Dorsolateral prefrontal cortex (tissue), 120 donors: ENCODE measurements at regions of chr1 and their contacts with region 1.

Region 1: GRCh38 chr1:51535006-51535592 is 16.0 kb upstream of the EPS15 start:
- DNase-seq: peak; percentile 28 to 84 (median 58)
- H3K4me3 ChIP-seq: peak overlapping the region in 7 of 59 donors; percentile 10 to 43 (median 16)
- H3K27ac ChIP-seq: peak overlapping the region; percentile 38 to 99 (median 92)
- H3K27me3 ChIP-seq: no peaks in the 10 kb centered on the region
- CTCF ChIP-seq: peak; percentile 62 to 93 (median 82)

Region 2: GRCh38 chr1:51296383-51297357 is 238.4 kb before region 1 on chr1:
- intact Hi-C with region 1: loop called (anchors 5 to 10 kb)
- DNase-seq: peak; percentile 73 to 87 (median 82)
- H3K4me3 ChIP-seq: peak overlapping the region; percentile 45 to 79 (median 64)
- H3K27ac ChIP-seq: peak overlapping the region in 24 of 59 donors; percentile 2 to 84 (median 37)
- H3K27me3 ChIP-seq: no peaks in the 10 kb centered on the region
- CTCF ChIP-seq: peak; percentile 76 to 98 (median 94)

Region 3: GRCh38 chr1:51392241-51392640 is 142.9 kb before region 1 on chr1:
- intact Hi-C with region 1: no loop called
- DNase-seq: no peak
- H3K4me3 ChIP-seq: no peak overlapping the region
- H3K27ac ChIP-seq: no peak overlapping the region
- H3K27me3 ChIP-seq: no peaks in the 10 kb centered on the region
- CTCF ChIP-seq: no peak

Region 4: GRCh38 chr1:51569284-51570062 is 34.4 kb after region 1 on chr1:
- intact Hi-C with region 1: loop called in 1 of 2 experiments (anchors 5 kb)
- DNase-seq: no peak
- H3K4me3 ChIP-seq: no peak overlapping the region
- H3K27ac ChIP-seq: peak overlapping the region in 11 of 59 donors; percentile 2 to 59 (median 29)
- H3K27me3 ChIP-seq: no peaks in the 10 kb centered on the region
- CTCF ChIP-seq: peak in 33 of 56 donors; percentile 9 to 57 (median 30)